GM12878 (cell line): ENCODE measurements at regions of chr18 and their contacts with region 1.

Region 1: DNA sequence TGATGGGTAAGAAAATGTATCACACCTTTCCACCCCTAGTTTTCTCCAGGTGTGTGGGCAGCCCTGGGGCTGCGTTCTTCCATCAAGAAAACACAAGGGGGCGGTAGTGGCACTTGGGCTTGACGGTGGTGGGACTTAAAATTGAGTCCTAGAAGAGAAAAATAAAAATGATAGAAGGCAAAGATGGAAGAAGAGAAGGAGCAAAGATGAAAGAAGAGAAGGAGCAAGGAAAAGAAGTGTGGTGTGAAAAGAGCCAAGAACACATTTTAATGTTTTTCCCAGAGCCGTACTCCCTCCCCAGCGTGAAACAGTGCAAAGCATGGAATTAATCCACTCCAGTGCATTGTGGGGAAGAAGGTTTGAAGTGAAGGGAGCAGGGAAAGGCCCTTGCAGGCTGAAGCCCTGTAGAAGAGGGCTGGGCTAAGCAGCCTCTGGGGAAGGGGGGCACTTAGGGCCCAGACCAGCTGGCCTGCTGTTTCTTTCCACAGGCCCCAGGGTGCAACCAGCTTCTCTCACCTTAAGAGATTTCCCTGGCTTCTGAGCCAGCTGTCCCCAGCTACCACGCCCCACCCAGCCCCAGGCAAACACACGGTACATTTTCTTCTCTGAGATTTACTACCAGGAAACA is 256.8 kb downstream of the RNF152 start:
- DNase-seq: no peak
- ATAC-seq: peak; percentile 83
- H3K4me3 ChIP-seq: no peak overlapping the region
- H3K27ac ChIP-seq: no peak overlapping the region
- H3K4me1 ChIP-seq: no peaks in the 10 kb centered on the region
- H3K27me3 ChIP-seq: no peaks in the 10 kb centered on the region
- CTCF ChIP-seq: peak; percentile 66 to 74 (median 70)
- EP300 ChIP-seq: no peak
- POLR2A ChIP-seq: no peak
- RAD21 ChIP-seq: peak; percentile 76

Region 2: GRCh38 chr18:61471942-61472341 is 164.1 kb before region 1 on chr18:
- CTCF ChIA-PET with region 1: no interaction called
- POLR2A ChIA-PET with region 1: no interaction called
- RAD21 ChIA-PET with region 1: no interaction called
- SMC1A ChIA-PET with region 1: no interaction called
- in situ Hi-C with region 1: no loop called
- intact Hi-C with region 1: no loop called
- DNase-seq: no peak
- ATAC-seq: no peak
- H3K4me3 ChIP-seq: no peak overlapping the region
- H3K27ac ChIP-seq: no peak overlapping the region
- H3K4me1 ChIP-seq: no peaks in the 10 kb centered on the region
- H3K27me3 ChIP-seq: 0 out of 4 replicates have a peak, but pooled peaks cover 0 to 2% of the 10 kb centered on the region in 2 experiments
- CTCF ChIP-seq: no peak
- EP300 ChIP-seq: no peak
- POLR2A ChIP-seq: no peak
- RAD21 ChIP-seq: no peak

Region 3: GRCh38 chr18:61551586-61551985 is 84.4 kb before region 1 on chr18:
- CTCF ChIA-PET with region 1: no interaction called
- POLR2A ChIA-PET with region 1: no interaction called
- RAD21 ChIA-PET with region 1: no interaction called
- SMC1A ChIA-PET with region 1: no interaction called
- in situ Hi-C with region 1: no loop called
- intact Hi-C with region 1: no loop called
- DNase-seq: peak; percentile 7
- ATAC-seq: peak; percentile 80
- H3K4me3 ChIP-seq: no peak overlapping the region
- H3K27ac ChIP-seq: no peak overlapping the region
- H3K4me1 ChIP-seq: no peaks in the 10 kb centered on the region
- H3K27me3 ChIP-seq: no peaks in the 10 kb centered on the region
- CTCF ChIP-seq: peak; percentile 58 to 75 (median 67)
- EP300 ChIP-seq: no peak
- POLR2A ChIP-seq: no peak
- RAD21 ChIP-seq: peak; percentile 57

Region 4: GRCh38 chr18:61901323-61901986 is 265.4 kb after region 1 on chr18:
- CTCF ChIA-PET with region 1: no interaction called
- POLR2A ChIA-PET with region 1: no interaction called
- RAD21 ChIA-PET with region 1: no interaction called
- SMC1A ChIA-PET with region 1: interaction called, 4 read pairs
- in situ Hi-C with region 1: no loop called
- intact Hi-C with region 1: loop called (anchors 2 kb)
- DNase-seq: peak; percentile 7
- ATAC-seq: peak; percentile 99
- H3K4me3 ChIP-seq: no peak overlapping the region
- H3K27ac ChIP-seq: no peak overlapping the region
- H3K4me1 ChIP-seq: no peaks in the 10 kb centered on the region
- H3K27me3 ChIP-seq: no peaks in the 10 kb centered on the region; a peak in 2 of 4 replicates
- CTCF ChIP-seq: peak; percentile 87 to 99 (median 95)
- EP300 ChIP-seq: no peak
- POLR2A ChIP-seq: no peak
- RAD21 ChIP-seq: peak; percentile 72